ENCODE measurements at regions of chr14 and their contacts with region 1.

Region 1: DNA sequence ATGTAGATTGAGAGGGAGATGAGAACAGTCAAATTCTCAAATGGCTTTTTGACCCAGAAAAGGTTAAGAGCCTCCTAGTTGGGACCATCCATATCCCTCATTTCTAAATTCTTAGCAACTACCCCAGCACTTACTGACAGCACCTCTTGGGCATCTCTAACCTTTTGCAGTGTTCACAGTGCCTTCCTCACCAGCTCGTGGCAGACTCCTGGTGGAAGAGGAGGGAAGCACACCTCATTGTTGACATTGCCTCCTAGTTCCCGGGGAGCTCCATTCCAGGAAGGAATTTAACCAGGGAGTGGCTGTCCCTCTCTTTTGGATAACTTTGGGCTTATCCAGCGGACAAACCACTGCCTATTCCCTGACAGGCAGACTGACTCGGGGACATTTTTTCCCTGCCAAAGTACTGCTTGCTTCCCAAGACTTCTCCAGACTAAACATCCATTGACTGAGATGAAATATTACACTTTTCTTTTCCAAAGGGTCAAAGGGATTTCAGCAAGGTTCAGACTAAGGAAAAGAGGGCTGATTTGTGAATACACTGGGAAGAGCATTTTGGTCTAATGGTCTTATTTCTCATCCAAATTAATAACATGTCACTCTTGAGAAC is 9.0 kb upstream of the OR6J1 start:
- DNase-seq: peak; percentile 87
- H3K4me3 Mint-ChIP-seq: no peak overlapping the region
- H3K27ac Mint-ChIP-seq: no peak overlapping the region
- H3K4me1 Mint-ChIP-seq: peaks cover 10% of the 10 kb centered on the region
- H3K27me3 Mint-ChIP-seq: no peaks in the 10 kb centered on the region
- CTCF ChIP-seq: peak; percentile 84

Region 2: DNA sequence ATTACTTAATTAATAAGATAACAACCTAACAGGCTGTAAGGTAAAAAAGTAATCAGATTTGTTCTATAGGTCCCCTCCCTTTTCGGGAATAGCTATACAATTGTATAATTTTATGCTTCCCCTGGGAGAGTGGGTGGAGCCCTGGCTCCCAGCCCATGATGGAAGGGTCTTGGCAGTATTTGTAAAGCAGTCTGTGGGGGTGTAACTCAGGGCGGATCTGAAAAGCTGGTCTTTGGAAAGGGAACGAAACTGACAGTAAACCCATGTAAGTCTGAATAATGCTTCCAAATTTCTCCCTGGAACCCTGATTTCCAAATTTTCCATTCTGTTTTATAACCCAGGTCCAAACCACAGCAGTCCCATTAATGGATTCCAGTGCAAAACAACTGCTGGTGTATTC is 174.4 kb before region 1 on chr14:
- CTCF ChIA-PET with region 1: no interaction called
- POLR2A ChIA-PET with region 1: no interaction called
- intact Hi-C with region 1: no loop called
- DNase-seq: no peak
- H3K4me3 Mint-ChIP-seq: no peak overlapping the region
- H3K27ac Mint-ChIP-seq: no peak overlapping the region
- H3K4me1 Mint-ChIP-seq: peaks cover 5% of the 10 kb centered on the region
- H3K27me3 Mint-ChIP-seq: peaks cover 50% of the 10 kb centered on the region
- CTCF ChIP-seq: no peak

Region 3: GRCh38 chr14:22589096-22589839 is 63.8 kb before region 1 on chr14 and contains the start of gene DAD1:
- CTCF ChIA-PET with region 1: interaction called, 14 read pairs
- POLR2A ChIA-PET with region 1: interaction called, 22 read pairs
- intact Hi-C with region 1: no loop called
- DNase-seq: peak; percentile 99
- H3K4me3 Mint-ChIP-seq: peak within 1 kb of the TSS; percentile 92
- H3K27ac Mint-ChIP-seq: peak within 1 kb of the TSS; percentile 96
- H3K4me1 Mint-ChIP-seq: peaks cover 21% of the 10 kb centered on the region
- H3K27me3 Mint-ChIP-seq: peaks cover 25% of the 10 kb centered on the region
- CTCF ChIP-seq: no peak
- total RNA-seq, gene DAD1: 166 and 210 TPM in 2 replicates

Region 4: DNA sequence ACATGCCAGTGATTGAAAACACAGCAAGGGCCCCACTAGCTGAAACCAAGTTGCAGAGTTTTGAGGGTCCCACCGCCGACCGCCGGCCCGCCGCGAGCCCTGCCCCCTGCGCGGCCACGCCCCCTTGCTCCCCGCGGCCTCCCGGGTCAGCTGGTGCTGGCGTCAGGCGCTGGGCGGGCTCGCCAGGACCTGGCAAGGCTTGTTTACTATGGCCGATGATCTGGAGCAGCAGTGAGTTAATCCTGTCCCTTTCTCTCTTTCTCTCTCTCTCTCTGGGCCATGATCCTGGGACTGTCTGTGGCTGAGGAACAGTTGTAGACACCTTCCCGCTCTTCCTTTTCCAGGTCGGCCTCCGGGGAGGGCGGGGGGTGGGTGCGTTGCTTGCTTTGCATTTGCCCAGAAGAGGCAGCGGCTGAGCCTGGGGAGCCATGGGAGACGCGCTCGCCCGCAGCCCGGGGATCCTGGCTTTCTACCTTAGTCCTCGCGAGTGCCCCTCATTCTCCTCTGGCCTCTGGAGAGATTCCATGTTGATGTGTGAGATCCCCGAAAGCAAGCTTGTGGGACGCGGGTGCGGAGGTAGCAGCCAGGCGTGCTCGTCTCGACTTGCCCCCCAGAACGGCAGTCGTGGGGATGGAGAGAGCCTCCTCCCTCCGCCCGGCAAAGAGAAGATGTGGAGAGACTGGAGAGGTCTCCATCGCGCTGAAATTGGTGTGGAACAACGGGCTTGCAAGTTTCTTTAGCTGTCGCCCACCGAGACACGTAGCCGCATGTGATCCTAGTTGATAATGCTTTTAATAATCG is 54.8 kb before region 1 on chr14 and contains the start of gene ABHD4:
- CTCF ChIA-PET with region 1: interaction called, 69 read pairs
- POLR2A ChIA-PET with region 1: interaction called, 70 read pairs
- intact Hi-C with region 1: loop called (anchors 1 kb)
- DNase-seq: peak; percentile 60
- H3K4me3 Mint-ChIP-seq: peak within 1 kb of the TSS; percentile 97
- H3K27ac Mint-ChIP-seq: peak within 1 kb of the TSS; percentile 88
- H3K4me1 Mint-ChIP-seq: peaks cover 15% of the 10 kb centered on the region
- H3K27me3 Mint-ChIP-seq: peaks cover 26% of the 10 kb centered on the region
- CTCF ChIP-seq: no peak
- total RNA-seq, gene ABHD4: 10.3 and 16.7 TPM in 2 replicates

Region 5: GRCh38 chr14:22713631-22713950 is 60.5 kb after region 1 on chr14:
- CTCF ChIA-PET with region 1: interaction called, 3 read pairs
- POLR2A ChIA-PET with region 1: no interaction called
- intact Hi-C with region 1: loop called (anchors 2 kb)
- DNase-seq: no peak
- H3K4me3 Mint-ChIP-seq: peak overlapping the region; percentile 72
- H3K27ac Mint-ChIP-seq: no peak overlapping the region
- H3K4me1 Mint-ChIP-seq: no peaks in the 10 kb centered on the region
- H3K27me3 Mint-ChIP-seq: peaks cover 34% of the 10 kb centered on the region
- CTCF ChIP-seq: no peak

Region 6: DNA sequence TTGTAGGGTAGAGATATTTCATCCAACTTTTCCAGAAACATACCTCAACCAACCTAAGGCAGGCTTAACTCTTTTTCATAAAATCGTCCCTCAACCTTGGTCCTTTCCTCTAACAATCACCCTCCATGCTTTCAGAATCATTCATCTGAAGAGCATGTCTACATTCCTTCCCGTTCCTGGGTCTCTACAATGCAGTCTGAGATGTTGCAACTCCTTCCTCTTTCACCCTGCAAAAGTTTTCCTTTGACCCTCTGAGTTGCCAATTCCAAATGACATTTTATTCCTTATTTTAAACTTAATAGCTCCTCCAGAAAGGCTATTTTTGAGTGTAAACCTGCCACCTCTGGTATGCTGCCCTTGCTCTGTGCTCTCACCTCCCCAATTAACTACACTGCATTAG is 145.4 kb after region 1 on chr14:
- CTCF ChIA-PET with region 1: no interaction called
- POLR2A ChIA-PET with region 1: no interaction called
- intact Hi-C with region 1: no loop called
- DNase-seq: no peak
- H3K4me3 Mint-ChIP-seq: no peak overlapping the region
- H3K27ac Mint-ChIP-seq: no peak overlapping the region
- H3K4me1 Mint-ChIP-seq: peaks cover 6% of the 10 kb centered on the region
- H3K27me3 Mint-ChIP-seq: peaks cover 25% of the 10 kb centered on the region
- CTCF ChIP-seq: no peak

Region 7: GRCh38 chr14:22829661-22830442 is 176.7 kb after region 1 on chr14 and contains the start of gene MRPL52:
- CTCF ChIA-PET with region 1: interaction called, 5 read pairs
- POLR2A ChIA-PET with region 1: interaction called, 3 read pairs
- intact Hi-C with region 1: loop called (anchors 10 kb)
- DNase-seq: peak; percentile 88
- H3K4me3 Mint-ChIP-seq: peak within 1 kb of the TSS; percentile 95
- H3K27ac Mint-ChIP-seq: peak within 1 kb of the TSS; percentile 76
- H3K4me1 Mint-ChIP-seq: peaks cover 9% of the 10 kb centered on the region
- H3K27me3 Mint-ChIP-seq: no peaks in the 10 kb centered on the region
- CTCF ChIP-seq: no peak
- total RNA-seq, gene MRPL52: 172 and 186 TPM in 2 replicates

Measured in MCF 10A (cell line).